MCF 10A (cell line): ENCODE measurements at regions of chr5 and their contacts with region 1.

Region 1: DNA sequence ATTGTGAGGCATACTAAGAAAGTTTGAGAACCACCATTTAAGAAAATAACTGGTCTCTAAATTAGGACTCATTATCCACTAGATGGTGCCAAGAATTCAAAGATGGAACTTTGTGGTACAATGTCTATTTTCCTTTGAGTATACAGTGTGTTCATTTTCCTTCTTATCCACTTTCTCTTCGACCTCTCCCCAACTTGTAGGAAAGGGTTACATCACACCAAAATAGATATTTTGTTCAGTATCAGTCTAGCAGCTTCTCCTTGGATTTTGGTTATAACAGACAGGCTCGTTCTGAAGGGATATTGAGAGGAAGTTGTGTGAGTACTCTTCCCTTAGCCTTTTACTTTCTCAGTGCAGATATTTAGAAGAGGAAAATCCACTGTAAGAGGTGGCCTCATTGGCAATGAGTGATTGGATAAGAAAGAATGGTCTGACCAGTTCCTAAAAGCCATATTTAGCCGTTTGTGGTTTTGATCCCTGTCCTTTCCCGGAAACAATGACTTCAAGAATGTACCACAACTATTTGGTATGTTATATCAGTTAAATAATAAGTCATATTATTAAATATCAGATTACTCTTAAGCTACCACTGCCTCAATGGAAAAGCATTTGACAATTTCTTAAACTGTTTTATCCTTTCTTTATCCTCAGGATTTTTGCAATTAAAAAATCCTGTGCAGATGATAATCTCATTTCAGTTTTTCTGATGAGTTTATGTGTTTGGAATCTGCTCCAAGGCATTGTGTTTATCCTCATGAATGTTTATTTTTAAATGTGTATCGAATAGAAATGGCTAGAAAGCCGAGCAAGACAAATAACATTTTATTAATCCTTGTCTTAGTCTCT is 69.0 kb upstream of the GRAMD2B start:
- DNase-seq: peak; percentile 90
- H3K4me3 Mint-ChIP-seq: peak overlapping the region; percentile 57
- H3K27ac Mint-ChIP-seq: peak overlapping the region; percentile 89
- H3K4me1 Mint-ChIP-seq: peaks cover 29% of the 10 kb centered on the region
- H3K27me3 Mint-ChIP-seq: no peaks in the 10 kb centered on the region
- CTCF ChIP-seq: peak; percentile 84

Region 2: GRCh38 chr5:125762883-125763282 is 591.4 kb before region 1 on chr5:
- CTCF ChIA-PET with region 1: no interaction called
- POLR2A ChIA-PET with region 1: no interaction called
- intact Hi-C with region 1: no loop called
- DNase-seq: no peak
- H3K4me3 Mint-ChIP-seq: no peak overlapping the region
- H3K27ac Mint-ChIP-seq: no peak overlapping the region
- H3K4me1 Mint-ChIP-seq: no peaks in the 10 kb centered on the region
- H3K27me3 Mint-ChIP-seq: no peaks in the 10 kb centered on the region
- CTCF ChIP-seq: no peak

Region 3: DNA sequence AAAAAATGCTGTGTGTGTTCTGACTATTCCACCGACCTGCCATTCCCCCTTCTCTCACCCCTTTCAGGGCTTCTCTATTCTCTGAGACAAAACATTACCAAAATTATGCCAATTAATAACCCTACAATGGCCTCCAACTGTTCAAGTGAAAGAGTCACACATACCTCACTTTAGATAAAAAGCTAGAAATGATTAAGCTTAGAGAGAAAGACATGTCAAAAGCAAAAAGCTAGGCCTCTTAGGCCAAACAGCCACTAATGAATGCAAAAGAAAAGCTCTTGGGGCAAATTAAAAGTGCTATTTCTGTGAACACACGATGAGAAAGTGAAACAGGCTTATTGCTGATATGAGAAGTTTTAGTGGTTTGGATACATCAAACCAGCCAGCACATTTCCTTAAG is 210.6 kb before region 1 on chr5:
- CTCF ChIA-PET with region 1: no interaction called
- POLR2A ChIA-PET with region 1: no interaction called
- intact Hi-C with region 1: no loop called
- DNase-seq: no peak
- H3K4me3 Mint-ChIP-seq: no peak overlapping the region
- H3K27ac Mint-ChIP-seq: no peak overlapping the region
- H3K4me1 Mint-ChIP-seq: peaks cover 12% of the 10 kb centered on the region
- H3K27me3 Mint-ChIP-seq: no peaks in the 10 kb centered on the region
- CTCF ChIP-seq: no peak

Region 4: GRCh38 chr5:126284977-126285696 is 69.1 kb before region 1 on chr5:
- CTCF ChIA-PET with region 1: no interaction called
- POLR2A ChIA-PET with region 1: no interaction called
- intact Hi-C with region 1: no loop called
- DNase-seq: no peak
- H3K4me3 Mint-ChIP-seq: no peak overlapping the region
- H3K27ac Mint-ChIP-seq: no peak overlapping the region
- H3K4me1 Mint-ChIP-seq: no peaks in the 10 kb centered on the region
- H3K27me3 Mint-ChIP-seq: no peaks in the 10 kb centered on the region
- CTCF ChIP-seq: no peak

Region 5: DNA sequence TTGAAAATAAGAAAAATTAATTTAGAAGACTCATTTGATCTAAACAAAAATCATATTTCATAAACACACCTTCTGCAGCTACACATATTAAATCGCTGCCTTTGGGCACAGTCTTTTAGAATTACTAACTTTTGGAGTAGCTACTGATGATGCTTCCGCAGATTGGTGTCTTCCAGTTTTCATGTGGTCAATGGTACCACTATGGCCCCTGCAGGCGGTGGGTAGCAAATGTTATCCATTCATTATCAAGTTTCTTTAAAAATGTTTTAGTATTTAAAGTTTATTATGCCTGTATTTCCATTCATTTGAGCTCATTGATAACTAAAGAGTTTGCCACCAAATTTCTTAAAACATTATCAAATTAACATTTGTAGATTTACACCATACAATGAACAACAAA is 53.9 kb before region 1 on chr5:
- CTCF ChIA-PET with region 1: no interaction called
- POLR2A ChIA-PET with region 1: no interaction called
- intact Hi-C with region 1: no loop called
- DNase-seq: no peak
- H3K4me3 Mint-ChIP-seq: no peak overlapping the region
- H3K27ac Mint-ChIP-seq: no peak overlapping the region
- H3K4me1 Mint-ChIP-seq: no peaks in the 10 kb centered on the region
- H3K27me3 Mint-ChIP-seq: no peaks in the 10 kb centered on the region
- CTCF ChIP-seq: no peak

Region 6: DNA sequence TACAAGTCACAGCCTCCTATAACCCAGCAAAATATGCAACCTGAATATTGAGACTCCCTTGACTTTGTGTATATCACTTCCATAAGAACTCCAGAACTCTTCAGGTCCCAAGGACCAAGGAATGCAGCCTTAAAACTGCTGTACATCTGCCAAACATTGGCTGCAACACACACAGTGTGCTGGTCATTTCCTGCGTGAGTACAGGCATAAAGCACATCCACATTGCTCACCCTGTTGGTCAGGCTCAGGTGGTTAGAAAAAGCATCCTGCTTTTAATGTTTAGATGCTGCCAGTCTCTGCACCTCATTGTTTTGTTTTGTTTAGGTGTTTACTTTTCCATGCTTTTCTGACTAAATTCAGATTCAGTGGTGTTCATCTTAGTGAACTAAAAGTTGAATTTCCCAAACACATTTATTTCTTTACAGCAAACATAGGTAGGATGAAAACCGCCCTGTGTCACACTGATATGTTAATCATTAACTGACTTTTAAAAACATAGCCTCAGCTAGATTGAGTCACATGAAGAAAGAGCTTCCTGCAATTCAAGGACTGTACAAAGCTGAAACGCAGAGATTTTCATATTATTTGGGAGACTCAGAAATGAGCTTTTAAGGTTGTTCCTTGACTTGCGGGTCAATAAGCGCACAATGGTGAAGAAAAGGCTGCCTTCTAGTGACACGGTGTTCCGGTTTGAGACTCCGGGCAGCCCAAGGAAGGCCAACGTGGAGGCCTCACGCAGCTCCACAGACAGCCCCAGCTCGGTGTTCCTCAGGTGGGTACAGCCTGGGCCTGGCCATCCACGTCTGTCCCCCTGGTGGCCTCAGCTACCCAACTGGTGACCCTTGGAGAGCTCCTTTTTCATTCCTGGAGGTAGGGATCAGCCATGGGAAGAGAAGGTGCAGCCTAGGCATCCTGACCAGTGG is 16.8 kb after region 1 on chr5:
- CTCF ChIA-PET with region 1: interaction called, 27 read pairs
- POLR2A ChIA-PET with region 1: interaction called, 9 read pairs
- intact Hi-C with region 1: no loop called
- DNase-seq: peak; percentile 50
- H3K4me3 Mint-ChIP-seq: no peak overlapping the region
- H3K27ac Mint-ChIP-seq: no peak overlapping the region
- H3K4me1 Mint-ChIP-seq: peaks cover 27% of the 10 kb centered on the region
- H3K27me3 Mint-ChIP-seq: no peaks in the 10 kb centered on the region
- CTCF ChIP-seq: peak; percentile 7

Region 7: GRCh38 chr5:126471875-126472537 is 117.8 kb after region 1 on chr5:
- CTCF ChIA-PET with region 1: interaction called, 10 read pairs
- POLR2A ChIA-PET with region 1: interaction called, 3 read pairs
- intact Hi-C with region 1: no loop called
- DNase-seq: peak; percentile 66
- H3K4me3 Mint-ChIP-seq: no peak overlapping the region
- H3K27ac Mint-ChIP-seq: peak overlapping the region; percentile 92
- H3K4me1 Mint-ChIP-seq: peaks cover 25% of the 10 kb centered on the region
- H3K27me3 Mint-ChIP-seq: no peaks in the 10 kb centered on the region
- CTCF ChIP-seq: no peak

Region 8: DNA sequence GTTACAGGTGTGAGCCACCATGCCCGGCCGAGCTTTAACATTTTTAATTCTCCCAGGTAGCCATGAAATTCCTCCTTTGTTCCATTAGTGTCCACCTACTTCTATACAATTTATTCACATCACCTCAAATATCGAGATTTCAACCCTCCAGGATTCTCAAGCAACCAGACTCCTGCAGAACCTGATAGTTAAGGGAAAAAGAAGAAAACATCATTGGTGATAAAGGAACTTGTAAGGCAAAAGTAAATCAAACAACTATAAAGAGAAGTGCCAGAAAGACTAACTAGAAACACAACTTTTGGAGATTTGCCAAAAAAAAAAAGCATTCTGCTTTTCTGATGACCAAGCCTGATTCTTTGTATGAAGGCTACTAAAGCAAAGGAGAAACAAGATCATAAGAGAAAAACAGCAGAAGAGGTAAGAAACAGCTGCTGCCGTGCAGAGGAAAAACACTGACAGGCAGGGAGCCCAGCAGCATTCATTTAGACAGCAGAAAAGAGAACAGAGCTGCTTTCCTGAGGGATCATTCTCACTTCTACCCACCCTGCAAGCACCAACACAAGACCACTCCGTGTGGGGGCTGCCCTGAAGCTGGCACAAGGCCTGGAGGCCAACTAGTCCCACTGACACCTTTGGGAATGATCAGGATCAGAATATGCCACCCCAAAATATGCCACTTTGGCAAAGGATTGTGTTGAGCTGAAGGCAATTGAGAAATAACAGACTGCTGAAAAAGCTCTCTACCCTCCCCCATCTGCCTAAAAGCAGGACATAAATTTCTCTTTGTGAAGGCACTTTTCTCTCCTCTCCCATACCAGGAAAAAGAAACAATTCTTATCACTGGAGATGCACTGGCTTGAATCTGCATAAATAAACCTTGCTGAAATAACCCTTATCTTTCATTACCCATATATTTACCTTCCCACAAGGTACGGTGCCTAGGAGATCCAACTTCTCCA is 165.7 kb after region 1 on chr5:
- CTCF ChIA-PET with region 1: interaction called, 9 read pairs
- POLR2A ChIA-PET with region 1: interaction called, 10 read pairs
- intact Hi-C with region 1: no loop called
- DNase-seq: no peak
- H3K4me3 Mint-ChIP-seq: no peak overlapping the region
- H3K27ac Mint-ChIP-seq: peak overlapping the region; percentile 68
- H3K4me1 Mint-ChIP-seq: peaks cover 26% of the 10 kb centered on the region
- H3K27me3 Mint-ChIP-seq: no peaks in the 10 kb centered on the region
- CTCF ChIP-seq: no peak

Region 9: DNA sequence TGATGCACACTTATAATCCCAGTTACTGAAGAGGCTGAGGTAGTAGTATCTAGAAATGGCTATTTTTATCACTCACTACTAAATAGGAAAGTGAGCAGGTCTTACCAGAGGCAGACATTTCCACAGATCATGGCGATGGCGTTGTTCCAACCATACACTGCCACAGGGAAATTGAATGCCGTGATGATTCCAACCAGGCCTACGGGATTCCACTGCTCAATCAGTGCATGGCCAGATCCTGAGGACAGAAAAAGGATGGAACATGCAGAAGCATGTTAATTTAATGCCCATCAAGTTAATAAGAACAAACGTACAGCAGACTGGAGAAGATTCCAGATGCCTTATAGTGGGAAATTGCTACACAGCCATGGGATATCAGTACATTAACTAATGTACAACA is 222.7 kb after region 1 on chr5:
- CTCF ChIA-PET with region 1: interaction called, 10 read pairs
- POLR2A ChIA-PET with region 1: interaction called, 3 read pairs
- intact Hi-C with region 1: no loop called
- DNase-seq: no peak
- H3K4me3 Mint-ChIP-seq: no peak overlapping the region
- H3K27ac Mint-ChIP-seq: no peak overlapping the region
- H3K4me1 Mint-ChIP-seq: no peaks in the 10 kb centered on the region
- H3K27me3 Mint-ChIP-seq: no peaks in the 10 kb centered on the region
- CTCF ChIP-seq: no peak

Region 10: GRCh38 chr5:126776497-126777256 is 422.4 kb after region 1 on chr5 and contains the start of gene LMNB1:
- CTCF ChIA-PET with region 1: no interaction called
- POLR2A ChIA-PET with region 1: no interaction called
- intact Hi-C with region 1: loop called (anchors 5 kb)
- DNase-seq: peak; percentile 98
- H3K4me3 Mint-ChIP-seq: peak within 1 kb of the TSS; percentile 100
- H3K27ac Mint-ChIP-seq: peak within 1 kb of the TSS; percentile 95
- H3K4me1 Mint-ChIP-seq: peaks cover 6% of the 10 kb centered on the region
- H3K27me3 Mint-ChIP-seq: no peaks in the 10 kb centered on the region
- CTCF ChIP-seq: no peak
- total RNA-seq, gene LMNB1: 19.6 and 31.6 TPM in 2 replicates